ENCODE measurements at regions of chr5 and their contacts with region 1.

Region 1: GRCh38 chr5:140639148-140639979 is at the start of gene TMCO6:
- DNase-seq: peak; percentile 73
- ATAC-seq: peak; percentile 97
- H3K4me3 ChIP-seq: peak within 1 kb of the TSS; percentile 85
- H3K27ac ChIP-seq: peak within 1 kb of the TSS; percentile 47
- H3K4me1 ChIP-seq: peaks cover 4% of the 10 kb centered on the region; the same call in 1 of the 2 replicates
- H3K27me3 ChIP-seq: no peaks in the 10 kb centered on the region
- CTCF ChIP-seq: peak; percentile 63 to 71 (median 69)
- EP300 ChIP-seq: no peak
- POLR2A ChIP-seq: peak; percentile 86
- RAD21 ChIP-seq: peak; percentile 16; the same call in 1 of the 2 replicates
- polyA plus RNA-seq, gene TMCO6: 4.1 to 4.3 TPM

Region 2: GRCh38 chr5:140322751-140323731 is 316.3 kb before region 1 on chr5:
- CTCF ChIA-PET with region 1: no interaction called
- POLR2A ChIA-PET with region 1: no interaction called
- RAD21 ChIA-PET with region 1: no interaction called
- SMC1A ChIA-PET with region 1: no interaction called
- in situ Hi-C with region 1: no loop called
- intact Hi-C with region 1: no loop called
- DNase-seq: no peak
- ATAC-seq: peak; percentile 58
- H3K4me3 ChIP-seq: no peak overlapping the region
- H3K27ac ChIP-seq: no peak overlapping the region
- H3K4me1 ChIP-seq: no peaks in the 10 kb centered on the region
- H3K27me3 ChIP-seq: no peaks in the 10 kb centered on the region
- CTCF ChIP-seq: no peak
- EP300 ChIP-seq: no peak
- POLR2A ChIP-seq: no peak
- RAD21 ChIP-seq: no peak

Region 3: GRCh38 chr5:140557136-140557805 is 82.1 kb before region 1 on chr5 and contains the start of gene SRA1:
- CTCF ChIA-PET with region 1: interaction called, 3 read pairs
- POLR2A ChIA-PET with region 1: interaction called, 10 read pairs
- RAD21 ChIA-PET with region 1: interaction called, 4 read pairs
- SMC1A ChIA-PET with region 1: interaction called, 6 read pairs
- in situ Hi-C with region 1: no loop called
- intact Hi-C with region 1: no loop called
- DNase-seq: peak; percentile 60
- ATAC-seq: peak; percentile 93
- H3K4me3 ChIP-seq: peak within 1 kb of the TSS; percentile 91
- H3K27ac ChIP-seq: peak within 1 kb of the TSS; percentile 95
- H3K4me1 ChIP-seq: peaks cover 22% of the 10 kb centered on the region
- H3K27me3 ChIP-seq: no peaks in the 10 kb centered on the region
- CTCF ChIP-seq: no peak
- EP300 ChIP-seq: no peak
- POLR2A ChIP-seq: peak; percentile 97
- RAD21 ChIP-seq: no peak
- polyA plus RNA-seq, gene SRA1: 35.3 to 52.7 TPM

Region 4: DNA sequence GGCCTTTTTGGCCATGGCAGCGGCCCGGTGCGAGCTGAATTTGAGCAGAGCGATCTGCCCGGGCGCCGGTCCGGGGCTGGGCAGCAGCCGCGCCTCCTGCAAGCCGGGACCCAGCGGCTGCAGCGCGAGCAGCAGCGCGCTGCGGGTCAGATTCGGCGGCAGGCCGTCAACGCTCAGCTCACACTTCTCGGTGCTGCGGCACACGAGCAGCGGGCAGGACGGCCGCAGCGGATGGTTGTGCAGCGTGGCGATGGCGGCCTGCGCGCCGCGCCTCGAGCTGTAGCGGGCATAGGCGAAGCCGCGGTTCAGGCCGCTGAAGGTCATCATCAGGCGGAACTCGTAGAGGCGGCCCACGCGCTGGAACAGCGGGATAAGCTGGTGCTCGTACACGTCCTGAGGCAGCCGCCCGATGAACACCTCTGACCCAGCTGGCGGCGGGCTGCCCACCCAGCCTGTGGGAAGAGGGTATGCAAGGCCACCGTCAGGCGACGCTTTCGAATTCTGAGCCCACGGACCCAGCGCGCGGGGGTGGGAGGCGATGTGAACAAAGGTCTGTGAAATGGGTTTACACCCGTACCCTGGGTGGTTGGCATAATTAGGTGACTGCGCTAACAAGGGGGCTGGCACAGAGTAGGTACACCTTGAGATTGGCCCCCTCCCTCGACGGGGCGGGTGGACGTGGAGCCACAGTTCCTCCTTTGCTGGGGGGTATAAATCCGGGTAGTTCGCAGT is 33.3 kb after region 1 on chr5:
- CTCF ChIA-PET with region 1: no interaction called
- POLR2A ChIA-PET with region 1: no interaction called
- RAD21 ChIA-PET with region 1: no interaction called
- SMC1A ChIA-PET with region 1: no interaction called
- in situ Hi-C with region 1: no loop called
- intact Hi-C with region 1: no loop called
- DNase-seq: no peak
- ATAC-seq: no peak
- H3K4me3 ChIP-seq: no peak overlapping the region
- H3K27ac ChIP-seq: no peak overlapping the region
- H3K4me1 ChIP-seq: no peaks in the 10 kb centered on the region
- H3K27me3 ChIP-seq: no peaks in the 10 kb centered on the region
- CTCF ChIP-seq: no peak
- EP300 ChIP-seq: no peak
- POLR2A ChIP-seq: peak; percentile 18; the same call in 1 of the 2 replicates
- RAD21 ChIP-seq: no peak

Measured in GM12878 (cell line).